ENCODE measurements at regions of chr16 and their contacts with region 1.

Region 1: GRCh38 chr16:50235581-50235980 is 30.8 kb upstream of the ADCY7 start:
- DNase-seq: no peak
- ATAC-seq: no peak
- H3K4me3 ChIP-seq: no peak overlapping the region
- H3K4me3 Mint-ChIP-seq: no peak overlapping the region
- H3K27ac ChIP-seq: no peak overlapping the region
- H3K27ac Mint-ChIP-seq: no peak overlapping the region
- H3K4me1 ChIP-seq: no peaks in the 10 kb centered on the region
- H3K4me1 Mint-ChIP-seq: no peaks in the 10 kb centered on the region
- H3K27me3 ChIP-seq: no peaks in the 10 kb centered on the region
- H3K27me3 Mint-ChIP-seq: no peaks in the 10 kb centered on the region

Region 2: GRCh38 chr16:50059669-50060068 is 175.9 kb before region 1 on chr16:
- CTCF ChIA-PET with region 1: interaction called in 1 of 2 experiments, 10 read pairs
- POLR2A ChIA-PET with region 1: no interaction called
- DNase-seq: no peak
- ATAC-seq: no peak
- H3K4me3 ChIP-seq: no peak overlapping the region
- H3K4me3 Mint-ChIP-seq: no peak overlapping the region
- H3K27ac ChIP-seq: no peak overlapping the region
- H3K27ac Mint-ChIP-seq: no peak overlapping the region
- H3K4me1 ChIP-seq: no peaks in the 10 kb centered on the region
- H3K4me1 Mint-ChIP-seq: no peaks in the 10 kb centered on the region
- H3K27me3 ChIP-seq: no peaks in the 10 kb centered on the region
- H3K27me3 Mint-ChIP-seq: no peaks in the 10 kb centered on the region

Region 3: DNA sequence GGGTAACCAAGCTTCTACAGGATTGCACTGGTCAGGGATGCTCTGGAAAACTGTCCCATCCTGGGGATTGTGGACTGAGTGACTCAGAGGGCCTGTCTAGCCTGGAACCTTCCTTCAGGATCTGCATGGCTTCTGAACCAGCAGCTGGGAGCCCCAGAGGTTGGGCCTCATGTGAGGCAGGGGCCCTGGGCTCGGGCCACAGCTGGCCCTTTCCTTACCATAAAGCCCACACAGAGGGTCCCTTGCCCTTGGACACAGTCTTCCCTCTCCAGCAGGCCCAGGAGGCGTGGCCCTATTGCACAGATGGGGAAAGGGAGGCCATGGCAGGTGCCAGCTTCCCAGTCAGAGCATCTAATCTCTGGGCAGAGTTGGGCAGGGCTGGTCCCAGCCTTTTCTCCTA is 61.2 kb after region 1 on chr16:
- CTCF ChIA-PET with region 1: no interaction called
- POLR2A ChIA-PET with region 1: interaction called in 1 of 2 experiments, 11 read pairs
- DNase-seq: no peak
- ATAC-seq: no peak
- H3K4me3 ChIP-seq: no peak overlapping the region
- H3K4me3 Mint-ChIP-seq: no peak overlapping the region
- H3K27ac ChIP-seq: no peak overlapping the region
- H3K27ac Mint-ChIP-seq: peak overlapping the region in 1 of 2 donors; percentile 15
- H3K4me1 ChIP-seq: peaks cover 0 to 18% of the 10 kb centered on the region in 2 experiments
- H3K4me1 Mint-ChIP-seq: peaks cover 0 to 6% (median 6%) of the 10 kb centered on the region in 3 donors
- H3K27me3 ChIP-seq: no peaks in the 10 kb centered on the region
- H3K27me3 Mint-ChIP-seq: no peaks in the 10 kb centered on the region

Measured in T-cell (primary cell).